Cardiac septum (tissue), 1 donor: ENCODE measurements at regions of chr22 and their contacts with region 1.

Region 1: GRCh38 chr22:19723983-19724827 is 866 bp downstream of the GP1BB start:
- DNase-seq: no peak

Region 2: GRCh38 chr22:19941365-19942082 is 217.3 kb after region 1 on chr22 and contains the starts of genes COMT and TXNRD2:
- intact Hi-C with region 1: loop called (anchors 5 kb)
- DNase-seq: peak; percentile 85
- total RNA-seq, gene COMT: 97.1 TPM
- total RNA-seq, gene TXNRD2: 33.3 TPM

Region 3: DNA sequence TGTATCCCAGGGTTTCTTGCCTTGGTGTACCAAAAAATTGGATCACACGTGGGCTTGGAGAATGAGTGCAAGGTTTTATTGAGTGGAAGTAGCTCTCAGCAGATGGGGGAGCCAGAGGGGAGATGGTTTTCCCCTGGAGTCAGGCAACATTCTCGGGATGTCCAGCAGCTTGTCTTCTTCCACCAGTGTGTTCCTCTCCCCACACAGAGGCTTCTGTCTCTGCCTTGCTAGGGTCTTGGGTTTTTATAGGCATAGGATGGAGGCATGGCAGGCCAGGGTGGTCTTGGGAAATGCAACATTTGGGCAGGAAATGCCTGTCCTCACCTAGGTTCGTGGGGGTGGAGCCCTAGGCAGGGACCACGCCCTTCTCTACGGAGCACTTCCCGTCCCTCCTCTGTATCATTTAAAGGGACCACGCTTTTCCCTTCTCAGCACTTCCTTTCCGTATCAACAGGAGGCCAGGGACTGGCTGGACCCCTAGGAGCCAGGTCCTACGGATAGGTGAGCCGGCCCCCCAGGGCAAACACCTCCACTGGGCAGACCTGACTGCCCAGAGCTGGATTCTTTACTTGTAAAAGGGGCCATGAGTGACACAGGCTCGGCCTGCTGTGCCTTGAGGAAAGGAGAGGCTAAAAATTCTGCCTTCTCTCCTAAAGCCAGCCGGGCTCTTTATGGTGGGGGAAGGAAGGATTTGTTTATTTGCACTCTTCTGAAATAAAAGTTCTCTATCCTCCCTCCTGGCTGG is 481.9 kb after region 1 on chr22:
- intact Hi-C with region 1: no loop called
- DNase-seq: peak; percentile 84